ENCODE measurements at regions of chr12 and their contacts with region 1.

Region 1: DNA sequence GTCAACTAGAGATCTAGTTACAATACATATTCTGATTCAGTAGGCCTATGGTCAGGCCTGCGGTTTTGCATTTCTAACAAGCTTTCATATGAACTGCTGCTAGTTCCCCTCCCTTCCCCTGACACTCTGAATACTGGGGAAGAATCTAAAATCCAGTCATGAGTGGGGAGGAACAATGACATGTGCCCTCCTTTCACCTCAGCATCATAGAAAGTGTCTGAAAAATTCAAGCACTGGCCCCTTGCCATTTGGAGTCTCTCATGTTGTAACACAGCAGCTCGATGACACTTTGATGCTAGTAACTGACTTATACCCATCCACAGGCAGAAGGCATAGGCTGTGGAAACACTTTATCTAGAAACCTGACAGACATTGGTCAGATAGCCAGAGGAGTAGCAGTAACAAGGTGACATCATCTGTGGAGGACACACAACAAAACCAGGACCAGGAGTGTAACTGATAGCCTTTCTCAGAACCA is 161.9 kb upstream of the RASSF8 start:
- DNase-seq: peak in 1 of 3 donors; percentile 17
- ATAC-seq: peak; percentile 91
- H3K4me3 ChIP-seq: no peak overlapping the region
- H3K27ac ChIP-seq: peak overlapping the region; percentile 43
- H3K4me1 ChIP-seq: peaks cover 3% of the 10 kb centered on the region
- H3K27me3 ChIP-seq: no peaks in the 10 kb centered on the region

Region 2: DNA sequence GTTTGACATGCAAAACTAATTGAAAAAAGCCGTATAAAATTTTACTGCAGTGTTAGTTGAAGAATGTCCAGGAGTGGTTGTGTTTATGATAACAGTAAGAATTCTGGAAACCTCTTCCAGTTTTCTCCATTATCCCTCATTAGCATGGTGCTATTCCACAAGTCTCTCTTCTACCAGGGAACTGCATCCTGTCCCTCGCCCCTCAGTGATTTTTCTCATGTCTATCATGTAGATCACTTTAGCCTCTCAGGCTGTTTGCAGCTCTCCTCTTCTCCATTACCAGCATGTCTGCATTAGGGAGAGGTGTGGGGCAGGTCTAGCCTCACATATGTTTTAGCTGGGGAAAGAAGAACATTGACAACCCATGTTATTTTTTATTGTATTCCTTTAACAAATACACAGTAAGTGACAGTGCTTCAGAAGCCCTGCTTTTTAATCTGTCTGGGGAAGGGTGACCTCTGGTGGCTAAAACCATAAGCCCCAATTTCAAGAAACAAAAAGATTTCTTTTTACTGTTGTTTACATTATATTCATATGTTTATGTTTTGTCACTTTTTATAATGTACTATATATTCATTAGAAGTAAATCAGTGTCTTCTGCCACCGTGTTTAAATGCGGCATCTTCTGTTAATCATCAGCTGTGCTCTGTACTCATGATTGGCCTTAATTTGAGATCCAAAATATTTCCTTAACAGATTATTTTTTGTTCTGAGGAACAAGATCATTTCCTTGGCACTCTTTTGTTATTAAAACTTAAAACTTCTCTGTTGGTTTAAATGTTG is 232.6 kb after region 1 on chr12:
- intact Hi-C with region 1: loop called in 1 of 4 experiments (anchors 5 kb)
- DNase-seq: no peak
- ATAC-seq: peak; percentile 56 to 71
- H3K4me3 ChIP-seq: no peak overlapping the region
- H3K27ac ChIP-seq: no peak overlapping the region
- H3K4me1 ChIP-seq: peaks cover 6% of the 10 kb centered on the region
- H3K27me3 ChIP-seq: no peaks in the 10 kb centered on the region